ENCODE measurements at regions of chr15 and their contacts with region 1.

Region 1: DNA sequence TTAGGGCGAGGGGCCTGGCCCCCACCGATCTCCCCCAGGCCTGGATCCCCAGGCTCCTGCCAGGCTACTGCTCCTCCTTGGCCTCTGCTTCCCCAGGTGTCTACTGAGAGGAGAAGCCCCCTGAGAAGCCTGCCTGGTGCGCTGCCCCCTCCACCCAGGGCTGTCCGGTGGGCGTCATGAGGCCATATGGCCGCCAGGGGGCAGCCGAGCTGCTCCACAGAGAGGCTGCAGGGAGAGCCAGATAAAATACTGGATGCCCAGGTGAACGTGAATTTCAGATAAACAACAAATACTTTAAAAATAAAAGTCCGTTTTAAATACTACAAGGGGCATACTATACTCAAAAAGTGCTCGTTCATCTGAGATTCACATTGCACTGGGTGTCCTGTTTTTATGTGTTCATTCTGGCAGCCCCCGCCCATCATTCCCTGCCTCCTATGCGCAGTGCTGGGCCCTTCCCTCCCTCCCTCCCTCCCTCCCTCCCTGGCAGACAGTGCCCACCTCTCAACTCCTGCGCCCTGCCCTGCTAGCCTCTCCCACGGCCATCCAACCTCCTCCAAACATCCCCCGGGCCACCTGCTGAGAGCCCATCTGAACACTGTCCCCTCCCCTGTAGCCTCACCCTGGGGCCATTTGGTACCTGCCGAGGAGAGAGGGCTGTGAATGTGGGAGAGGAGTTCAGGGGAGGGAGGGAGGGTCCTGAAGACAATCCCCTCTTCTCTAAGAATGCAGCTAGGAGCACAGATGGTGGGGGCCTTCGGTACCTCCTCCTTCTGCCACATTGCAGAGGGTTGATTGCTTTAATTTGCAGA is 29.6 kb downstream of the PSTPIP1 start:
- DNase-seq: no peak
- ATAC-seq: peak; percentile 66
- H3K4me3 ChIP-seq: no peak overlapping the region
- H3K27ac ChIP-seq: no peak overlapping the region
- H3K4me1 ChIP-seq: peaks cover 33% of the 10 kb centered on the region
- H3K27me3 ChIP-seq: no peaks in the 10 kb centered on the region
- CTCF ChIP-seq: peak; percentile 75 to 93 (median 83)
- EP300 ChIP-seq: no peak
- POLR2A ChIP-seq: no peak
- RAD21 ChIP-seq: peak; percentile 83

Region 2: DNA sequence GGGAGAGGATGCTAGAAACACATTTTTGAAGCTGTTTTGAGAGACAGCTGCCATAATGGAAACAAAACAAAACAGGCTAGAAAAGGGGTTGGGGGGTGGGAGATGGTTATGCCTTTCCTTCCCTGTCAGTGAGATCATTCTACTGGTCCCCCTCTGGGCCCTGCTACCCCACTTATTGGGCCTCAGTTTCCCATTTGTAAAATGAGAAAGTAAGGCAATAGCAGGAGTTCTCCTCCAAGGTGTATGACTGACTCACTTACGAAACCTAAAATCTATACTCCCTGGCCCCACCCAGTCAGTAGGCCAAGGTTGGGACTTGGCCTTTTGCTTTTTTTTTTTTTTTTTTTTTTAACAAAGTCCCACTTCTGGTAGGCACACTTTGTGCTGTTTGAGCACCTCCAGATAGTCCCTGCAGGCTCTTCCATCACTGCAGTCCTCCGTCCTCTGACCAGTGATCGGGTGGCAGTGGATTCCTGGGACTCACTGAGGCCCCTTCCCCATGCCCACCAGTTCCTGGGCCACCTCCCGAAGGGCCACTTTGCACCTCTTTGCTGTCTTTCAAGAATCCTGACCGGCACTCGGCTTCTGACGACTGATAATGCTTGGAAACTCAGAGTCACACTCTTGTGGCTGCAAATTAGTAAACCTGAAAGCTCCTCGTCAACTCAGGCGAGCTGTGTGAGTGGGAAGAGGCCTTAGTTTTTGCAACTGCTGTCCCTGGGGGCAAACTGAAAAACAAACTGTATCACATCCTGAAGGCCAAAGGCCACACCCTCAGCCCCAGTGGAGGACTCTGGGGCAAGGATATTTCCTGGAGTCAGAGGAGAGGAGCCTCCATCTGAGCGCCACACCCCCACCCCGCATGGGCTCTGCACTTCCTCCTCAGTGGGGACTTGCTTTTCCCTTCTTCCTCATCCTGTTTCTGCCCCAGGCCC is 36.3 kb before region 1 on chr15:
- CTCF ChIA-PET with region 1: interaction called, 483 read pairs
- POLR2A ChIA-PET with region 1: interaction called, 39 read pairs
- RAD21 ChIA-PET with region 1: interaction called, 259 read pairs
- SMC1A ChIA-PET with region 1: interaction called, 9 read pairs
- in situ Hi-C with region 1: no loop called
- intact Hi-C with region 1: no loop called
- DNase-seq: peak; percentile 90
- ATAC-seq: peak; percentile 91
- H3K4me3 ChIP-seq: peak overlapping the region; percentile 40; the same call in 1 of the 2 replicates
- H3K27ac ChIP-seq: peak overlapping the region; percentile 89
- H3K4me1 ChIP-seq: peaks cover 41% of the 10 kb centered on the region
- H3K27me3 ChIP-seq: no peaks in the 10 kb centered on the region
- CTCF ChIP-seq: no peak
- EP300 ChIP-seq: peak; percentile 79 to 94; a peak in 3 of 4 replicates
- POLR2A ChIP-seq: peak; percentile 53
- RAD21 ChIP-seq: peak; percentile 25; the same call in 1 of the 2 replicates

Region 3: GRCh38 chr15:76994971-76995945 is 29.2 kb before region 1 on chr15 and contains the start of gene PSTPIP1:
- CTCF ChIA-PET with region 1: interaction called, 43 read pairs
- POLR2A ChIA-PET with region 1: interaction called, 39 read pairs
- RAD21 ChIA-PET with region 1: interaction called, 22 read pairs
- SMC1A ChIA-PET with region 1: interaction called, 13 read pairs
- in situ Hi-C with region 1: no loop called
- intact Hi-C with region 1: no loop called
- DNase-seq: no peak
- ATAC-seq: peak; percentile 64
- H3K4me3 ChIP-seq: peak within 1 kb of the TSS; percentile 68
- H3K27ac ChIP-seq: peak within 1 kb of the TSS; percentile 55
- H3K4me1 ChIP-seq: peaks cover 32% of the 10 kb centered on the region
- H3K27me3 ChIP-seq: no peaks in the 10 kb centered on the region
- CTCF ChIP-seq: no peak
- EP300 ChIP-seq: no peak
- POLR2A ChIP-seq: peak; percentile 95
- RAD21 ChIP-seq: no peak
- polyA plus RNA-seq, gene PSTPIP1: 0.50 to 5.7 TPM

Region 4: GRCh38 chr15:77002954-77003912 is 21.2 kb before region 1 on chr15:
- CTCF ChIA-PET with region 1: interaction called, 42 read pairs
- POLR2A ChIA-PET with region 1: interaction called, 19 read pairs
- RAD21 ChIA-PET with region 1: interaction called, 9 read pairs
- SMC1A ChIA-PET with region 1: interaction called, 13 read pairs
- in situ Hi-C with region 1: no loop called
- intact Hi-C with region 1: no loop called
- DNase-seq: peak; percentile 77
- ATAC-seq: peak; percentile 90
- H3K4me3 ChIP-seq: peak overlapping the region; percentile 26; the same call in 1 of the 2 replicates
- H3K27ac ChIP-seq: peak overlapping the region; percentile 16
- H3K4me1 ChIP-seq: peaks cover 27% of the 10 kb centered on the region
- H3K27me3 ChIP-seq: no peaks in the 10 kb centered on the region
- CTCF ChIP-seq: no peak
- EP300 ChIP-seq: peak in 1 of 2 experiments; percentile 20; a peak in 1 of 4 replicates
- POLR2A ChIP-seq: no peak
- RAD21 ChIP-seq: no peak

Region 5: GRCh38 chr15:77013776-77014131 is 10.7 kb before region 1 on chr15:
- CTCF ChIA-PET with region 1: interaction called, 30 read pairs
- POLR2A ChIA-PET with region 1: interaction called, 7 read pairs
- RAD21 ChIA-PET with region 1: interaction called, 9 read pairs
- SMC1A ChIA-PET with region 1: interaction called, 18 read pairs
- in situ Hi-C with region 1: no loop called
- intact Hi-C with region 1: no loop called
- DNase-seq: no peak
- ATAC-seq: peak; percentile 82
- H3K4me3 ChIP-seq: no peak overlapping the region
- H3K27ac ChIP-seq: peak overlapping the region; percentile 66; the same call in 1 of the 2 replicates
- H3K4me1 ChIP-seq: peaks cover 31% of the 10 kb centered on the region
- H3K27me3 ChIP-seq: no peaks in the 10 kb centered on the region
- CTCF ChIP-seq: 0 out of 6 replicates have a peak, but pooled peaks of 1 of the 3 experiments have one; percentile 1
- EP300 ChIP-seq: peak; percentile 52 to 54; a peak in 3 of 4 replicates
- POLR2A ChIP-seq: no peak
- RAD21 ChIP-seq: no peak

Region 6: DNA sequence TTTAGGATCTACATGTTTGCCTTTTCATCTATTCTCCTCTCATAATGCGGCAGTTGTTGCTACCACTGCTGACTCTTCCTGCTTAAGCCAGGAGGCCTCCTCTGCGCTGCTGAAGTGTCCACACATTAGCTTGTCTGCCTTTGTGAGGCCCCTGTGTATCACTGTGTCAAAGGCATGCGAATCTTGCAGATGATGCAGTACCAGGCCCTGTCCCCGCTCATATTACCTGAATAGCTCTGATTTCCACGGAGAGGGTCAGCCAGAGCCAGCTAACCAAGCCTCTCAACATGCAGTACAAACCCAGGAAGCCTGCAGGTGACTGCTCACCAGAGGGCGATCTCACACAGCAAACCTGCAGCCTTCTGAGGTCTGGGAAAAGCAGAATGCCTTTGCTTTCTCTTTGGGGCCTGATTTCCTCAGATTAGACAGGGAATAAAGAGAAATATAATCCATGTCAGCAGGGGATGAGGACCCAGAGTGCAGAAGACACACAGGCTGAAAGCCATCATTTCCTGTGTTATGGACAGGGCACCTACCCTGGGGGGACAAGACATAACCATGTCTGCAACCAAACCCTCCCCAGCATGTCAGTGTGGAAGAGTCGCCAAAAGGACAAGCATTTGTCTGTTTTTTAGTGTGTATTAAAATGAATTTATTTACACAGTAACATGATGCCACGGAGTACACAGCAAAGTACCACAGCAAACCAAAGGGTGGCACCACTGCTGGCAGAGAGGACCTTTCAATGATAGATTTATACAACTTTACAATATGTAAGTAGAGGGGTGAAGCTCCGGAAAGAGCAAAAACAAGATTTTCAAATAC is 83.3 kb after region 1 on chr15:
- CTCF ChIA-PET with region 1: interaction called, 13 read pairs
- POLR2A ChIA-PET with region 1: no interaction called
- RAD21 ChIA-PET with region 1: no interaction called
- SMC1A ChIA-PET with region 1: interaction called, 3 read pairs
- in situ Hi-C with region 1: no loop called
- intact Hi-C with region 1: no loop called
- DNase-seq: no peak
- ATAC-seq: peak; percentile 82
- H3K4me3 ChIP-seq: no peak overlapping the region
- H3K27ac ChIP-seq: no peak overlapping the region
- H3K4me1 ChIP-seq: no peaks in the 10 kb centered on the region
- H3K27me3 ChIP-seq: no peaks in the 10 kb centered on the region
- CTCF ChIP-seq: peak; percentile 61 to 76 (median 69)
- EP300 ChIP-seq: no peak
- POLR2A ChIP-seq: no peak
- RAD21 ChIP-seq: peak; percentile 78

Region 7: GRCh38 chr15:77126529-77127326 is 102.3 kb after region 1 on chr15:
- CTCF ChIA-PET with region 1: no interaction called
- POLR2A ChIA-PET with region 1: no interaction called
- RAD21 ChIA-PET with region 1: no interaction called
- SMC1A ChIA-PET with region 1: no interaction called
- in situ Hi-C with region 1: no loop called
- intact Hi-C with region 1: no loop called
- DNase-seq: no peak
- ATAC-seq: no peak
- H3K4me3 ChIP-seq: no peak overlapping the region
- H3K27ac ChIP-seq: no peak overlapping the region
- H3K4me1 ChIP-seq: peaks cover 10% of the 10 kb centered on the region
- H3K27me3 ChIP-seq: no peaks in the 10 kb centered on the region
- CTCF ChIP-seq: no peak
- EP300 ChIP-seq: no peak
- POLR2A ChIP-seq: no peak
- RAD21 ChIP-seq: no peak